ENCODE measurements at regions of chr1 and their contacts with region 1.

Region 1: DNA sequence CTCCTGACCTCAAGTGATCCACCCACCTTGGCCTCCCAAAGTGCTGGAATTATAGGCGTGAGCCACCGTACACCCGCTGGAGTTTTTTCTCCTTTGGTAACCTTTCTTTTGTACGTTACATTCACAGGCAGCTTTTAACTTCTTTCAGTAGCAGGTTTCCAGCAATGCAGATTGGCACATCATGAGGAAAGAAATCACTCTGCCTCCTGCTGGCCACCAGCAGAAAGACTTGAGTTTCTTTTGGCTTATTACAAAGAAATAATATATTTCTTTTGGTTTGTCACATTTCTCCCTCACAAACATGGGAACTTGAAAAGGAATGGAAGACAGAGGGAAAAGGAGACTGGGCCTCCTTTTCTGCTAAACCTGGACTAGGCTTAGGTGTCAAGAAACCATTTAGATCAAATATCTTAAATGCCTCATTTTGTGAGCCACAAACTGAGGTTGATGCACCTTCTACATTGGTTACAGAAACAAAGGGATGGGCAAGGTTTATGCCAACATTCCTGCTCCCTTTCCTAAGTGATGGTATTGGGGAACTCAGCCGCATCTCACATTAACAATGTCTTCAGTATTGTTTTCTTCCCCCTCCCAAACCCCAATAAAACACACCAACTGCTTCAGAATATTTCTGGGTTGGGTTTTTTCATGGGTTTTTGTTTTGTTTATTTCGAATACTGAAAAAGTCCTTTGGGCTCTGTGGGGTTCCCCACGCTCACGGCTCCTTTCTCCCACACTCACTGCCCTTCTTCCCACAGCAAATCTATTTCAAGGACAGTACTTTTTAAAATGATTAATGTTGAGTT is 7.7 kb downstream of the ENSA start:
- DNase-seq: no peak
- ATAC-seq: peak; percentile 43

Region 2: DNA sequence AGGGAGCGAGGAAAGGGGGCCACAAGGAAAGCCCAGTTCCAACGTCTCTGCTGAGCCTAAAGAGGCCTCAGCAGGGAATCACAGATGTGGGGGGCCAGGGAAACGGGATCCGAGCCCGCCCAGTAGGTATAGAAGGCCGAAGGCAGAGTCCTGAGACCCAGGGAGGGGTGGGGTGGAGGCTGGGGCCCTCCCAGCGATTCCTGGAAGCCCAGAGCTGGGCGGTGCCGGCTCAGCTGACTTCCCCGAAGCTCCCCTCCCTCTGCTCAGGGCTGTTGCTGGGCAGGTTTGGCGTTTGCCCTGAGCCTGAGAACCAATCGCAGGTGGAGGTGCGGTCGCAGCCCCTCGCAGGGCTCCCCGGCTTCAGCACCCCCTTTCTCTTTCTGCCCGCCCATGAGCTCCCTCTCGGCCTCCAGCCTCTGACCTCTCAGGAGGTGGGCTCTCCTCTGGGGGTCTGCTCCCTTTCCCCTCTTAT is 59.7 kb before region 1 on chr1:
- intact Hi-C with region 1: loop called (anchors 5 kb)
- DNase-seq: peak; percentile 97
- ATAC-seq: peak; percentile 90

Measured in sciatic nerve (tissue), 2 donors.